Naive thymus-derived CD4-positive, alpha-beta T cell (primary cell): ENCODE measurements at regions of chr3 and their contacts with region 1.

Region 1: DNA sequence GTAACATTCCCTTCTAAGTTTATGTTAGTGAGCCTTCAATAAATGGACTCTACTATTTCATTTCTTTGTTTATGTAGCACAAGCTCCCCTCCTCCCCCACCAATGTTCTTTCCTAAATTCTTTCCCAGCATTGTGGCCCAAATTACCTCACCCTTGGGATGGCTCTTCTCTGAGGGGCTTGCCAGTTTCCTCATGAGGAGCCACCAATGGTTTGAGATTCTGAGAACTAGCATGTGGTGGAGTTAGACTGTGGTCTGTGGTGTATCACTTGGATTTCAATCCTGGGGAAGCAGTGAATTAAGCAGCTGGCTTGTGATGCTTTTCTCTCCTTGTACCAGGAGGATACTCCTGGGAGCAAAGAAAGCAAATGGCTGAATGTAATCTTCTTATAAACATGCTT is 50.0 kb upstream of the NPHP3 start:
- DNase-seq: no peak
- ATAC-seq: no peak
- H3K4me3 ChIP-seq: no peak overlapping the region
- H3K4me3 Mint-ChIP-seq: no peak overlapping the region
- H3K27ac ChIP-seq: no peak overlapping the region
- H3K27ac Mint-ChIP-seq: no peak overlapping the region
- H3K4me1 ChIP-seq: no peaks in the 10 kb centered on the region
- H3K4me1 Mint-ChIP-seq: no peaks in the 10 kb centered on the region
- H3K27me3 ChIP-seq: no peaks in the 10 kb centered on the region
- H3K27me3 Mint-ChIP-seq: peaks cover 6 to 22% (median 15%) of the 10 kb centered on the region in 5 donors

Region 2: GRCh38 chr3:132325103-132325606 is 447.1 kb before region 1 on chr3:
- CTCF ChIA-PET with region 1: no interaction called
- POLR2A ChIA-PET with region 1: no interaction called
- intact Hi-C with region 1: no loop called
- DNase-seq: no peak
- ATAC-seq: no peak
- H3K4me3 ChIP-seq: no peak overlapping the region
- H3K4me3 Mint-ChIP-seq: no peak overlapping the region
- H3K27ac ChIP-seq: no peak overlapping the region
- H3K27ac Mint-ChIP-seq: no peak overlapping the region
- H3K4me1 ChIP-seq: no peaks in the 10 kb centered on the region
- H3K4me1 Mint-ChIP-seq: no peaks in the 10 kb centered on the region
- H3K27me3 ChIP-seq: no peaks in the 10 kb centered on the region
- H3K27me3 Mint-ChIP-seq: peaks cover 5 to 37% (median 19%) of the 10 kb centered on the region in 5 donors

Region 3: GRCh38 chr3:132783152-132783551 is 10.9 kb after region 1 on chr3:
- CTCF ChIA-PET with region 1: no interaction called
- POLR2A ChIA-PET with region 1: no interaction called
- intact Hi-C with region 1: loop called in 1 of 2 experiments (anchors 1 kb)
- DNase-seq: no peak
- ATAC-seq: no peak
- H3K4me3 ChIP-seq: no peak overlapping the region
- H3K4me3 Mint-ChIP-seq: no peak overlapping the region
- H3K27ac ChIP-seq: no peak overlapping the region
- H3K27ac Mint-ChIP-seq: no peak overlapping the region
- H3K4me1 ChIP-seq: no peaks in the 10 kb centered on the region
- H3K4me1 Mint-ChIP-seq: no peaks in the 10 kb centered on the region
- H3K27me3 ChIP-seq: no peaks in the 10 kb centered on the region
- H3K27me3 Mint-ChIP-seq: peaks cover 10 to 24% (median 19%) of the 10 kb centered on the region in 5 donors

Region 4: GRCh38 chr3:132843851-132844553 is 71.8 kb after region 1 on chr3:
- CTCF ChIA-PET with region 1: no interaction called
- POLR2A ChIA-PET with region 1: no interaction called
- intact Hi-C with region 1: no loop called
- DNase-seq: no peak
- ATAC-seq: no peak
- H3K4me3 ChIP-seq: no peak overlapping the region
- H3K4me3 Mint-ChIP-seq: no peak overlapping the region
- H3K27ac ChIP-seq: no peak overlapping the region
- H3K27ac Mint-ChIP-seq: no peak overlapping the region
- H3K4me1 ChIP-seq: no peaks in the 10 kb centered on the region
- H3K4me1 Mint-ChIP-seq: no peaks in the 10 kb centered on the region
- H3K27me3 ChIP-seq: peaks cover 0 to 4% of the 10 kb centered on the region in 2 donors
- H3K27me3 Mint-ChIP-seq: peaks cover 0 to 17% (median 12%) of the 10 kb centered on the region in 5 donors